GM13976 (cell line): ENCODE measurements at regions of chr11 and their contacts with region 1.

Region 1: GRCh38 chr11:34149786-34150185 is 44.4 kb downstream of the NAT10 start:
- DNase-seq: no peak
- CTCF ChIP-seq: peak; percentile 10

Region 2: DNA sequence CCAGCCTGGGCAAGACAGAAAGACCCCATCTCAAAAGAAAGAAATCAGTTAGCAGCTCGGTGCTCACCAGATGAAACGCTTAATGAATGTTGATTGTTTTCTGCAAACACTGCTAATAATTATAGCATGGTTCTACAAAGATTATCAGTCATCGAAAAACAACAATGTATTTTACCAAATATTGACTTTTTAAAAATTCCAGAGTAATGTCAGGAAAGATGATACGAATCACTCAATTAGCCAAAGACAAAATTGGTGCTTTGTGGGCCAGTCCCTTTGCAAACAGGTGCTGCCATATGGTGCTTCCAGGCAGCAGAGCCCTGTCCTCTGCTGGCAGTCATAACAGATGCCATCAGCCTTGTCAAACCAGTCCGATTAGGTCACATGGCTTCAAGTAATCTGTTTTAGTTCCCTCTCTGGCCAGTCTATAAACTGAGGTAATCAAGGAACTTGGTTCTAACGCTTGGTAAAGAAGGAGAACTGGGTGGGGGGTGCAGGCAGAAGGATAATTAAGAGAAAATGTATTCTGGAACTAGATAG is 147.4 kb before region 1 on chr11:
- in situ Hi-C with region 1: loop called (anchors 10 kb)
- DNase-seq: no peak
- CTCF ChIP-seq: no peak